ENCODE measurements at regions of chr2 and their contacts with region 1.

Region 1: DNA sequence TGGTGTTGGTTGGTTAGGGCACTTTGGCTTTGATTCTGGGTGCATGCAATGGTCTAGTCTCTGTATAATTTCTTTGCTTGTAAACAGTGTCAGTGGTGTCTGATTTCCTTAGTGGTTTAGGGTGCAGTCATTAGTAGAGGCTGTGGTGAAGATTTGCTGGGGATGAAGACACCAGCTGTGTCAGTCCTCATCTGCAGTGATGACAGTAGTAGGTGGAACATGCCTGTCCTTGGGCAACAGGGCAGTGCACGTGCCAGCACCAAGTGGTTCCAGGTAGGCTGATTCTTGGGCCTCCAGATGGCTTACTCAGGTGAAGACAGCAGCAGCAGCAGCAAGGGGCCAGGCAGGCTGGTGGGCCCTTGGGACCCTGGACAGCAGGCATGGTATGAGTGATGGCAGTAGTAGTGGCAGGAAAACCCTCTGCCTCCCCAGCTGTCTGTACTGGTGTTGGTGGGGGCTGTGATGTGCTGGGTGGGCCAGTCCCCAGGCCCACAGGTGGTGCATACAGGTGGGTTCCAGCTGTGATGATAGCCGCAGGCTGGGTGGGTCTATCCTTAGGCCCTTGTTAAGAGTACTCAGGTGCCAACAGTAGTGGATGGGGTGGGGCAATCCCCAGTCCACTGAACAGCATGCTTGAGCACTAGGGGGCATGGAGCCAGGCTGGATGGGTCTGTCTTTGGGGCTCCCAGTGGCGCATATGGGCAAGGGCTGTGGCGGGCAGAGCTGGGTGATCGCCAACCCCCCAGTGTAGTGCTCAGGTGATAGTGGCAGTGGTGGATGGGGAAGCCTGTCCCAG is 140.7 kb upstream of the THUMPD2 start:
- DNase-seq: peak; percentile 85
- H3K4me3 ChIP-seq: peak overlapping the region; percentile 50
- H3K27ac ChIP-seq: peak overlapping the region; percentile 95
- H3K4me1 ChIP-seq: peaks cover 78% of the 10 kb centered on the region
- CTCF ChIP-seq: no peak

Region 2: DNA sequence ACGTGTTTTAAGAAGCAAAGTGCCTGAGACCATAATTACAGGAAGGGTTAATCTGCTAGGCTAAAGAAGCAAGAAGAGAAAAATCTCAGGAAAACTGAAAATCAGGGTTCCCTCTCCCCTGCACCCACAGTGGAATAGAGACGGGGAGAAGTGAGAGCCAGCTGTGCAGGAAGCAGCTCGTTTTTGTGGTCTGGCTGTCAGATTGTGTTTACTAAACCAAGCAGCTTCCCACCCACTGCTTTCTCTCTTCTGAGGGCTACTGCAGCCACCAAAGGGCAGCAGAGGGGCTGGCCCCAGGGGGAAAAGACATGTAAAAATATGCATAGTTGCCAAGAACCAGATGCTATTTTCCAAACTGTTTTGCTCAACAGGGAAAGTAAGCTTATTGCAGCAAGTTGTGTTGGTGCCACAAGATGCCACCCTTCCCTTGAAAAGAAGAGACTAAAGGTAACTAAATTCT is 68.0 kb before region 1 on chr2:
- CTCF ChIA-PET with region 1: interaction called, 4 read pairs
- POLR2A ChIA-PET with region 1: interaction called, 4 read pairs
- intact Hi-C with region 1: loop called (anchors 2 kb)
- DNase-seq: peak; percentile 87
- H3K4me3 ChIP-seq: peak overlapping the region; percentile 39
- H3K27ac ChIP-seq: peak overlapping the region; percentile 74
- H3K4me1 ChIP-seq: peaks cover 51% of the 10 kb centered on the region
- CTCF ChIP-seq: peak; percentile 67

Region 3: GRCh38 chr2:39871291-39871761 is 48.4 kb before region 1 on chr2:
- CTCF ChIA-PET with region 1: no interaction called
- POLR2A ChIA-PET with region 1: no interaction called
- intact Hi-C with region 1: no loop called
- DNase-seq: no peak
- H3K4me3 ChIP-seq: no peak overlapping the region
- H3K27ac ChIP-seq: no peak overlapping the region
- H3K4me1 ChIP-seq: no peaks in the 10 kb centered on the region
- CTCF ChIP-seq: no peak

Region 4: DNA sequence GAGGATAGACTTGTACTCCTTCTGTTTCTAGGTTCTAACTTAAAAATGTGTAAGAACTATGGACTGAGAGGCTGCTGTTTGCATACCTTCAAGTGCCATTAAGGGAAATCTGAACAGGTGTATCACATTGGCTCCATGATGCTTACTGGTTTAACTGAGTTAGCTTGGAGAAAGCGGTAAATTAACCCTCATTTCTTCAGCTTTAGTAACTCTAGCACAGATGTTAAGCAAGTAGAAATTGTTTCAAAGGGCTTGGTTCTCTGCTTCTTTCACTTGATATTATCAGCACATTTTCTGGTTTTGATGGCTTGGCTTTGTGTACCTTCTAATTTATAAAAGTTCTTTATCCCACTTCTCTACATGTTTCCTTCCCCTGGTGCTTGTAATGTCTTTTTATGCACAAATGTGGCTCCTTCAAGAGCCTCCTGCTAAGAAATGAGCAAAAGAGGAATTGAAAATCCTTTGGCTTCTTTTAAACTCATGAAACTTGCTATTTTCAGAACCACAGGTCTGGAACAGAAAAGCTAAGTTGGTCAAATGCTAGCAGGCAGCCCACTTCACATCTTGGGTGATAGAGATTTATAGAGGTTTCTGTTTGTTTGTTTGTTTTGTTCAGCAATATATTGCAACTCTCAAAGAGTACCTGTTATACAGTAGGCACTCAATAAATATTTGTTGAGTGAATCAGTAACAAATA is 109.2 kb after region 1 on chr2:
- CTCF ChIA-PET with region 1: no interaction called
- POLR2A ChIA-PET with region 1: interaction called, 4 read pairs
- intact Hi-C with region 1: loop called (anchors 2 kb)
- DNase-seq: peak; percentile 82
- H3K4me3 ChIP-seq: peak overlapping the region; percentile 15
- H3K27ac ChIP-seq: peak overlapping the region; percentile 81
- H3K4me1 ChIP-seq: peaks cover 26% of the 10 kb centered on the region
- CTCF ChIP-seq: no peak

Region 5: DNA sequence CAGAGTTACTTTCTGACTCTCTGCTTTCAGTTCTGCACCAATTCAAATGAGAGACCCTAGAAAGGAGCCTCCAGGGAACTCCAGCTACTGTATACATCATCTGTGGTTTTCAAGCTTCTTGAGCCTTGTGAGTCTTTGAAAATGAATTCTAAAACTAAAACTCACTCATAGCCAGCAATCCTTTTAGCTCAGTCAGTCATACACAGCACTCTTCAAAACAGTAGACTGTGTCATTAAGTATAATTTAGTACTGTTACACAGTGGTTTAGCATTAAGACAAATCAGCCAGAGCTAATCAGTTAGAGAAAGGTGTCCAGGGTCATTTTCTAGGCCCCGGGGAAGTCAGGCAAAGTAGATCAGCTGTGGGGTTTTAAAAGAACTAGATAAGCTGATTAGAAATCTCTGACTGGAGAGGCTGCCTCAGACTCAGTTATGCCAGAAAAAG is 181.4 kb after region 1 on chr2:
- CTCF ChIA-PET with region 1: no interaction called
- POLR2A ChIA-PET with region 1: no interaction called
- intact Hi-C with region 1: loop called (anchors 5 kb)
- DNase-seq: peak; percentile 80
- H3K4me3 ChIP-seq: no peak overlapping the region
- H3K27ac ChIP-seq: no peak overlapping the region
- H3K4me1 ChIP-seq: peaks cover 29% of the 10 kb centered on the region
- CTCF ChIP-seq: no peak

Region 6: GRCh38 chr2:40160751-40161218 is 241.1 kb after region 1 on chr2:
- CTCF ChIA-PET with region 1: no interaction called
- POLR2A ChIA-PET with region 1: interaction called, 3 read pairs
- intact Hi-C with region 1: loop called (anchors 2 kb)
- DNase-seq: peak; percentile 87
- H3K4me3 ChIP-seq: peak overlapping the region; percentile 21
- H3K27ac ChIP-seq: peak overlapping the region; percentile 93
- H3K4me1 ChIP-seq: peaks cover 64% of the 10 kb centered on the region
- CTCF ChIP-seq: 0 out of 2 replicates have a peak, but pooled peaks have one; percentile 18

Region 7: GRCh38 chr2:40178971-40179370 is 259.3 kb after region 1 on chr2:
- CTCF ChIA-PET with region 1: no interaction called
- POLR2A ChIA-PET with region 1: interaction called, 4 read pairs
- intact Hi-C with region 1: loop called (anchors 5 kb)
- DNase-seq: peak; percentile 83
- H3K4me3 ChIP-seq: peak overlapping the region; percentile 35
- H3K27ac ChIP-seq: peak overlapping the region; percentile 71
- H3K4me1 ChIP-seq: peaks cover 34% of the 10 kb centered on the region
- CTCF ChIP-seq: no peak

Region 8: DNA sequence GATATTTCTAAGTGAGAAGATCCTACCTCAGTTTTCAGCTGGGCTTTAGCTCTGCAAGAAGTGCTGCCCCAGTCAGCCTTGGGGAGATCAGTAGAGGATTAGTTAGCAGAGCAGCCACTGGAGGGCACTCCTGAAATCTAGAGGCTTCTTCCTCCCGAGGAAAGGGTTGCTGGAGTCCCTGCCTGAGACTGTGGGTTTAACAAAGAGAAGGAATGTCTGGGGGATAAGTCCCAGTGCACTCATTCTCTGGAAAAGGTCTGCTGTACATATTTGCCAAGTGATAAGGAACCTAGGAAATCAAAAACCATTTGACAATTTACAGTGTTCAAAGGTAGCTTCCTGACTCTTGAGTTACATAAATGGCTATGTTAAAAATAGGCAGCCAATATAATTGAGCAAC is 325.0 kb after region 1 on chr2:
- CTCF ChIA-PET with region 1: no interaction called
- POLR2A ChIA-PET with region 1: no interaction called
- intact Hi-C with region 1: loop called (anchors 2 kb)
- DNase-seq: peak; percentile 75
- H3K4me3 ChIP-seq: no peak overlapping the region
- H3K27ac ChIP-seq: no peak overlapping the region
- H3K4me1 ChIP-seq: peaks cover 30% of the 10 kb centered on the region
- CTCF ChIP-seq: peak; percentile 88

Measured in OCI-LY7 (cell line).